ENCODE measurements at regions of chr15 and their contacts with region 1.

Region 1: DNA sequence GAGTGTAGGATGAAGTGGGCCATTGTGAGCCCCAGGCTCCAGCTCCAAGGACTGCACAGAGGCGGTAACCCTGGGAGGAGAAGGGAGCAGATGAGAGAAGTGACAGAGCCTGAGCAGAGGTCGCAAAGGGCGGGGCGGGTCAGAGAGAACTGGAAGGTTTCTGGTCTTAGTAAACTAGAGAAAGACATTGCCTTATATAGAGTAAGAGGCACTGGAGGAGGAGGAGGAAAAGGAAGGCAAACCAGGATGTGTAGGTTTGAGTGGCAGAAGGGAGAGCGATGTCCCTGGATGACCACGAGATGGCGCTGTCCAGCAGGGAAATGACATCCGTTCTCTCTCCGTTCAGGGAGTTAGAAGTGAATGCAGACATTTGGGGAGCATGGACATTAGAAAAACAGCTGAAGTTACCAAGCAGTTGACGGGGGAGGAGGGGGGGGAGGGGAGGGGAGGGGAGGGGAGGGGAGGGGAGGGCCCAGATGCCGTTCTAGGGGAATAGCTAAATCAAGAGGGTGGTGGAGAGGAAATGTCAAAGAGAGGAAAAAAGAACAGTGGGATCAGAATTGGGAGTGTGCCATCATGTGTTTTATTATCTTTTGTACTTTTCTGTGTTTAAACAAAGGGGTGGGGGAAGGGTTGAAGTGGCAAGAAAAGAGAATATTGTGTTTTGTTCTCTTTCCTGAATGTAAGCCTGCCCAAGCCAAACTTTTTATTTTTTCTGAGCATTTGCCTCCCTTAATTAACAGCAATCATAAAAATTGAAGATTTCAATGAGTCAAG is 48.8 kb downstream of the STARD5 start:
- DNase-seq: no peak
- H3K4me3 ChIP-seq: no peak overlapping the region
- H3K27me3 ChIP-seq: peaks cover 4% of the 10 kb centered on the region; the same call in 1 of the 2 replicates
- CTCF ChIP-seq: peak; percentile 84

Region 2: GRCh38 chr15:81296673-81297072 is 21.6 kb after region 1 on chr15:
- CTCF ChIA-PET with region 1: interaction called, 18 read pairs
- POLR2A ChIA-PET with region 1: no interaction called
- DNase-seq: no peak
- H3K4me3 ChIP-seq: no peak overlapping the region
- H3K27me3 ChIP-seq: no peaks in the 10 kb centered on the region; the same call in none of the 2 replicates
- CTCF ChIP-seq: no peak

Region 3: GRCh38 chr15:81336568-81336967 is 61.4 kb after region 1 on chr15:
- CTCF ChIA-PET with region 1: interaction called, 53 read pairs
- POLR2A ChIA-PET with region 1: no interaction called
- DNase-seq: no peak
- H3K4me3 ChIP-seq: no peak overlapping the region
- H3K27me3 ChIP-seq: peaks cover 1% of the 10 kb centered on the region; the same call in 1 of the 2 replicates
- CTCF ChIP-seq: peak; percentile 55

Region 4: GRCh38 chr15:81386947-81387346 is 111.8 kb after region 1 on chr15:
- CTCF ChIA-PET with region 1: interaction called, 13 read pairs
- POLR2A ChIA-PET with region 1: no interaction called
- DNase-seq: no peak
- H3K4me3 ChIP-seq: no peak overlapping the region
- H3K27me3 ChIP-seq: no peaks in the 10 kb centered on the region
- CTCF ChIP-seq: no peak

Region 5: GRCh38 chr15:81400640-81401236 is 125.6 kb after region 1 on chr15:
- CTCF ChIA-PET with region 1: interaction called, 120 read pairs
- POLR2A ChIA-PET with region 1: no interaction called
- DNase-seq: no peak
- H3K4me3 ChIP-seq: no peak overlapping the region
- H3K27me3 ChIP-seq: peaks cover 2% of the 10 kb centered on the region
- CTCF ChIP-seq: peak; percentile 73

Region 6: GRCh38 chr15:81469154-81469553 is 194.0 kb after region 1 on chr15:
- CTCF ChIA-PET with region 1: no interaction called
- POLR2A ChIA-PET with region 1: no interaction called
- DNase-seq: no peak
- H3K4me3 ChIP-seq: no peak overlapping the region
- H3K27me3 ChIP-seq: no peaks in the 10 kb centered on the region
- CTCF ChIP-seq: no peak